Heart left ventricle (tissue), 16 donors: ENCODE measurements at regions of chr5 and their contacts with region 1.

Region 1: GRCh38 chr5:68798877-68799843 is 294.7 kb upstream of the SLC30A5 start:
- DNase-seq: no peak
- ATAC-seq: no peak
- H3K4me3 ChIP-seq: no peak overlapping the region
- H3K27ac ChIP-seq: no peak overlapping the region
- H3K4me1 ChIP-seq: peaks cover 0 to 19% (median 0%) of the 10 kb centered on the region in 12 donors
- H3K27me3 ChIP-seq: no peaks in the 10 kb centered on the region
- CTCF ChIP-seq: no peak
- POLR2A ChIP-seq: no peak

Region 2: DNA sequence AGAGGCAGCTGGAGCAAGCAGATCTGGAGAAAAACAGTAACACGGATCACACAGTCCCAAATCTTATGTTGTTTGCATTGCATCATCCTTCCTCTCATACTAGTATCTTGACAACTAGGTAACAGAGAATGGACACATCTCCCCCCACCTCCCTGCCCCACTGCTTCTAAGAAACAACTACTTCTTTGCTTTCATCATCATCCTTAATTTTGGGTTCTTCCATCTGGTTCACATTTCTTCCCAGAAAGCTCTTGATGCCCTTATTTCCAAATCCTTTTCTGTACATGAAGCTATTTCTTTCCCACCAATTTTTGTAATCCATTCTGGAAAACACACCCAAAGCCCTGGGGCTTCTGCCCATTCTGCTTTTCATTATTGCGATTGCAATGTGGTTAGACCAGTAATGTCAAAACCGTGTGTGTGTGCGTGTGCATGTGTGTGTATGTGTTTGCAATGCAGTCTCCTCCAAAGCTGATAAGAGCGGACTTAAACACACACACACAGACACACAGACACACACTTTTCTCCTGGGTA is 39.9 kb after region 1 on chr5:
- intact Hi-C with region 1: loop called in 1 of 10 experiments (anchors 2 kb)
- DNase-seq: no peak
- ATAC-seq: no peak
- H3K4me3 ChIP-seq: no peak overlapping the region
- H3K27ac ChIP-seq: no peak overlapping the region
- H3K4me1 ChIP-seq: no peaks in the 10 kb centered on the region
- H3K27me3 ChIP-seq: no peaks in the 10 kb centered on the region
- CTCF ChIP-seq: no peak
- POLR2A ChIP-seq: no peak

Region 3: GRCh38 chr5:68872088-68872839 is 73.1 kb after region 1 on chr5:
- intact Hi-C with region 1: no loop called
- DNase-seq: no peak
- ATAC-seq: no peak
- H3K4me3 ChIP-seq: no peak overlapping the region
- H3K27ac ChIP-seq: no peak overlapping the region
- H3K4me1 ChIP-seq: no peaks in the 10 kb centered on the region
- H3K27me3 ChIP-seq: no peaks in the 10 kb centered on the region
- CTCF ChIP-seq: no peak
- POLR2A ChIP-seq: no peak

Region 4: DNA sequence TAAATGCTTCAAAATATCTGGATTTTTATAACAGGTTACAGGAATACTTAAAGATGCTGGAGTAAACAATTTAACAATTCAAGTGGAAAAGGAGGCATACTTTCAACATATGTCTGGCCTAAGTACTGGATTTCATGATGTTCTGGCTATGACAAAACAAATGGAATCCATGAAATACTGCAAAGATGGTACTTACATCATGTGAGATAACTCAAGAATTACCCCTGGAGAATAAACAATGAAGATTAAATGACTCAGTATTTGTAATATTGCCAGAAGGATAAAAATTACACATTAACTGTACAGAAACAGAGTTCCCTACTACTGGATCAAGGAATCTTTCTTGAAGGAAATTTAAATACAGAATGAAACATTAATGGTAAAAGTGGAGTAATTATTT is 330.3 kb after region 1 on chr5:
- intact Hi-C with region 1: no loop called
- DNase-seq: no peak
- ATAC-seq: no peak
- H3K4me3 ChIP-seq: no peak overlapping the region
- H3K27ac ChIP-seq: no peak overlapping the region
- H3K4me1 ChIP-seq: no peaks in the 10 kb centered on the region
- H3K27me3 ChIP-seq: no peaks in the 10 kb centered on the region
- CTCF ChIP-seq: no peak
- POLR2A ChIP-seq: no peak